Dorsolateral prefrontal cortex (tissue), 120 donors: ENCODE measurements at regions of chr18 and their contacts with region 1.

Region 1: GRCh38 chr18:5879479-5879882 is 15.8 kb downstream of the TMEM200C start:
- DNase-seq: no peak
- H3K4me3 ChIP-seq: no peak overlapping the region
- H3K27ac ChIP-seq: no peak overlapping the region
- H3K27me3 ChIP-seq: peaks cover 0 to 11% (median 0%) of the 10 kb centered on the region in 45 donors
- CTCF ChIP-seq: peak; percentile 75 to 97 (median 87)

Region 2: DNA sequence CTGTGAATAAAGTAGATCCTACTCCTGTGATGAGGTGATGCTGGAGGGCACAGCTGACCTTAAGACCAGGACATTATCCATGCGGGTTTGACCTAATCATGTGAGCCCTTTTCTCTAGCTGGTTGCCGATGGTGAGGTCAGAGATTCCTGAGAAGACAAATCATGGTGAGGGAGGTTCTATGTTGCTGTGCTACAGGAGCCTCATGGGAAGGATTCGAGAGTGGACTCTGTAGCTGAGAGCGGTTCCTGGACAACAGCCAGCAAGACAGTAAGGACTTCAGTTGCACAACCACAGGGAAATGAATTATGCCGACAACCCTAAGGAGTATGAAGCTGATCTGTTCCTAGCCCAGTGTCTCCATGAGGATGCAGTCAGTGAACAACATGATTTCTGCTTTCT is 416.1 kb before region 1 on chr18:
- intact Hi-C with region 1: no loop called
- DNase-seq: no peak
- H3K4me3 ChIP-seq: no peak overlapping the region
- H3K27ac ChIP-seq: no peak overlapping the region
- H3K27me3 ChIP-seq: no peaks in the 10 kb centered on the region
- CTCF ChIP-seq: no peak

Region 3: GRCh38 chr18:6401687-6402086 is 522.2 kb after region 1 on chr18:
- intact Hi-C with region 1: loop called in 1 of 2 experiments (anchors 10 kb)
- DNase-seq: no peak
- H3K4me3 ChIP-seq: no peak overlapping the region
- H3K27ac ChIP-seq: no peak overlapping the region
- H3K27me3 ChIP-seq: no peaks in the 10 kb centered on the region
- CTCF ChIP-seq: peak in 29 of 56 donors; percentile 10 to 61 (median 27)

Region 4: GRCh38 chr18:6482198-6482977 is 602.9 kb after region 1 on chr18:
- intact Hi-C with region 1: loop called (anchors 5 kb)
- DNase-seq: peak in 4 of 10 donors; percentile 10 to 63 (median 34)
- H3K4me3 ChIP-seq: no peak overlapping the region
- H3K27ac ChIP-seq: no peak overlapping the region
- H3K27me3 ChIP-seq: peaks cover 0 to 9% (median 0%) of the 10 kb centered on the region in 45 donors
- CTCF ChIP-seq: peak in 55 of 56 donors; percentile 38 to 91 (median 66)